Heart left ventricle (tissue), 16 donors: ENCODE measurements at regions of chr9 and their contacts with region 1.

Region 1: GRCh38 chr9:114072184-114073140 is 5.6 kb downstream of the AMBP start:
- DNase-seq: peak; percentile 37 to 76 (median 66)
- ATAC-seq: peak; percentile 37 to 88 (median 82)
- H3K4me3 ChIP-seq: no peak overlapping the region
- H3K27ac ChIP-seq: no peak overlapping the region
- H3K4me1 ChIP-seq: peaks cover 0 to 12% (median 4%) of the 10 kb centered on the region in 12 donors
- H3K27me3 ChIP-seq: peaks cover 0 to 22% (median 0%) of the 10 kb centered on the region in 9 donors
- CTCF ChIP-seq: no peak
- POLR2A ChIP-seq: no peak

Region 2: GRCh38 chr9:114138552-114138971 is 66.1 kb after region 1 on chr9:
- intact Hi-C with region 1: loop called in 1 of 10 experiments (anchors 10 kb)
- DNase-seq: no peak
- ATAC-seq: no peak
- H3K4me3 ChIP-seq: no peak overlapping the region
- H3K27ac ChIP-seq: no peak overlapping the region
- H3K4me1 ChIP-seq: peaks cover 0 to 34% (median 25%) of the 10 kb centered on the region in 12 donors
- H3K27me3 ChIP-seq: peaks cover 0 to 3% (median 0%) of the 10 kb centered on the region in 9 donors
- CTCF ChIP-seq: no peak
- POLR2A ChIP-seq: no peak